Esophagus muscularis mucosa (tissue), 4 donors: ENCODE measurements at regions of chr5 and their contacts with region 1.

Region 1: GRCh38 chr5:180860887-180861822 is at the start of gene ZFP62:
- DNase-seq: peak; percentile 94
- H3K4me3 ChIP-seq: peak within 1 kb of the TSS; percentile 72 to 98 (median 82)
- H3K27ac ChIP-seq: peak within 1 kb of the TSS; percentile 85 to 91 (median 88)
- H3K4me1 ChIP-seq: peaks cover 10 to 19% (median 14%) of the 10 kb centered on the region in 4 donors
- H3K27me3 ChIP-seq: no peaks in the 10 kb centered on the region
- CTCF ChIP-seq: peak in 2 of 3 experiments; percentile 6 to 11
- EP300 ChIP-seq: no peak
- POLR2A ChIP-seq: peak; percentile 28
- total RNA-seq, gene ZFP62: 17.7 to 22.8 (median 20.5) TPM

Region 2: DNA sequence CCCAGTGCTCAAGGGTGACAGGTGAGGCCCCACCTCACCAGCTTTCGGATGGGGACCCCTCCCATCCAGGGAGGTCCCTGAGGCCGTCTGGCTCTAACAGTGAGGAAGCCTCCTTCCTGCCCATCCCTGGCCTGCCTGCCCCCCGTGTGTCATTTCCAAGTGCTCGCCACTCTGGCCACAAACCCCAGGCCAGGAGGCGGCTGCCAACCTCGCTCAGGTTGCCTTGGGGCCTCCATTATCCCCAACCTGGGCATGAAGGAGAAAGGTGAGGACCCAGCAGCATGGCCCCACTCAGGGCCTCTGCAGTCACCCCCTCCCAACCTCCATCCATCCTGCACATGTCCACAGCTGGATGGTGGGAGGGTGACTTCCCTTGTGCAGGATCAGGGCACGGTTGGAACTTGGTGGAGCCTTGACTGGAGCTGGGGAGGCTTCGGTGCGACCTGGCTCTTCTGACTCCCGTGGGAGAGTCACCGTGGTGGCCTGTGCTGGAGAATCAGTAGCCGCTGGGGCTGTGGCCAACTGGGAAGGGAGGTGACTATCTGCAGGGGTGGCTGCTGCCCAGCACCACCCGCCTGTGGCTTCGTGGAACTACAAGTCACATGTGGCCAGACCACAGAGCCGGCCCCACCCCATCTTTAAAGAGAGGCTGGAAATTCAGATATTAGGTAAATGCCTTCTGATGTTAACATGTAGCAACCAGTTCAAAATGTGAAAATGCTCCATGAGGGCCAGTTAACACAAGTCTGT is 470.5 kb before region 1 on chr5:
- intact Hi-C with region 1: no loop called
- DNase-seq: no peak
- H3K4me3 ChIP-seq: no peak overlapping the region
- H3K27ac ChIP-seq: no peak overlapping the region
- H3K4me1 ChIP-seq: no peaks in the 10 kb centered on the region
- H3K27me3 ChIP-seq: no peaks in the 10 kb centered on the region
- CTCF ChIP-seq: no peak
- EP300 ChIP-seq: no peak
- POLR2A ChIP-seq: no peak

Region 3: GRCh38 chr5:180699042-180699441 is 162.1 kb before region 1 on chr5:
- intact Hi-C with region 1: no loop called
- DNase-seq: no peak
- H3K4me3 ChIP-seq: no peak overlapping the region
- H3K27ac ChIP-seq: no peak overlapping the region
- H3K4me1 ChIP-seq: no peaks in the 10 kb centered on the region
- H3K27me3 ChIP-seq: peaks cover 0 to 10% (median 0%) of the 10 kb centered on the region in 4 donors
- CTCF ChIP-seq: no peak
- EP300 ChIP-seq: no peak
- POLR2A ChIP-seq: no peak

Region 4: GRCh38 chr5:180720486-180720885 is 140.7 kb before region 1 on chr5:
- intact Hi-C with region 1: no loop called
- DNase-seq: peak; percentile 12
- H3K4me3 ChIP-seq: no peak overlapping the region
- H3K27ac ChIP-seq: no peak overlapping the region
- H3K4me1 ChIP-seq: no peaks in the 10 kb centered on the region
- H3K27me3 ChIP-seq: peaks cover 0 to 20% (median 0%) of the 10 kb centered on the region in 4 donors
- CTCF ChIP-seq: no peak
- EP300 ChIP-seq: no peak
- POLR2A ChIP-seq: no peak

Region 5: GRCh38 chr5:180908998-180909731 is 48.0 kb after region 1 on chr5:
- intact Hi-C with region 1: no loop called
- DNase-seq: no peak
- H3K4me3 ChIP-seq: no peak overlapping the region
- H3K27ac ChIP-seq: no peak overlapping the region
- H3K4me1 ChIP-seq: peaks cover 0 to 7% (median 0%) of the 10 kb centered on the region in 4 donors
- H3K27me3 ChIP-seq: peaks cover 0 to 14% (median 0%) of the 10 kb centered on the region in 4 donors
- CTCF ChIP-seq: no peak
- EP300 ChIP-seq: no peak
- POLR2A ChIP-seq: no peak

Region 6: DNA sequence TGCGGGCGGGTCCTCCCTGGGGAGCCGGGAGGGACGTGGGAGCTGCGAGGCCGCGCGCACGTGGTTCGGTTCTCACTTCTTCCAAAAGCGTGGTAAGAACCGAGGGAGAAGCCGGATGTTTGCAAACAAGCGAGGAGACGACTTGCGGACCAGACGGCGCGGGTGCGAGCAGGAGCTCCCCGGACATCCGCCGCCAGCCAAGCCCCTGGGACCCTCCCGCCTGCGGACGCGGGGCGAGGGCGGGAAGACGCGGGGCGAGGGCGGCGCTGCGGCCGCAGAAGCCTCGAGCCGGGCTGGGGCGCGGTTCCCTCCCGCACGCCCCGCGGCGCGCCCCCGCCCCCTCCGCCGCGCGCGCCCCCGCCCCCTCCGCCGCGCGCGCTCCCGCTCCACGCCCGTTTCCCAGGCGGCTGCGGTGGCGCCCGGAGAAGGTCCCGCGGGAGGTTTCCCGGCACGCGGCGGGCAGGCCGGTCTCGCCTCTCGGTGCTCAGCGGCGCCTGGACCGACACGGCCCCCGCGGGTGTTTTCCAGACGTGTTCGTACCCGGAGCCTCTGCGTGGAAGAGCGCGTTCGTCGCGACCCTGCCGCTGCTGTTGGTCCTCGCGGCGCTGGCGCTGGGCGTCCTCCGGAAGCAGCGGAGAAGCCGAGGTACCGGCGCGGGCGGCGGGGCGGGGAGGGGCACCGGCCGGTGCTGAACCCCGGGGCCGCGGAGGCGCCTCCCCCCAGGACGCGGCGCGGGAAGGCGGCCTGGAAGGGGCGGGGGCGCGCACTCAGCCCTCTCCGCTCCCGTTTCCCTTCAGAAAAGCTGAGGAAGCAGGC is 191.7 kb after region 1 on chr5:
- intact Hi-C with region 1: loop called (anchors 5 kb)
- DNase-seq: no peak
- H3K4me3 ChIP-seq: peak overlapping the region; percentile 54 to 68 (median 59)
- H3K27ac ChIP-seq: peak overlapping the region in 3 of 4 donors; percentile 35 to 43 (median 40)
- H3K4me1 ChIP-seq: peaks cover 20 to 26% (median 22%) of the 10 kb centered on the region in 4 donors
- H3K27me3 ChIP-seq: peaks cover 3 to 96% (median 50%) of the 10 kb centered on the region in 4 donors
- CTCF ChIP-seq: no peak
- EP300 ChIP-seq: no peak
- POLR2A ChIP-seq: no peak